CD4-positive, alpha-beta memory T cell (primary cell): ENCODE measurements at regions of chr1 and their contacts with region 1.

Region 1: GRCh38 chr1:24847995-24848881 is 81.8 kb downstream of the RUNX3 start:
- DNase-seq: peak; percentile 88 to 91 (median 89)
- H3K4me3 ChIP-seq: peak overlapping the region; percentile 18 to 73
- H3K4me3 Mint-ChIP-seq: peak overlapping the region; percentile 68 to 88 (median 78)
- H3K27ac ChIP-seq: peak overlapping the region; percentile 56
- H3K27ac Mint-ChIP-seq: peak overlapping the region; percentile 52 to 94 (median 81)
- H3K4me1 ChIP-seq: peaks cover 15% of the 10 kb centered on the region
- H3K4me1 Mint-ChIP-seq: peaks cover 7 to 22% (median 12%) of the 10 kb centered on the region in 4 donors
- H3K27me3 ChIP-seq: no peaks in the 10 kb centered on the region
- H3K27me3 Mint-ChIP-seq: no peaks in the 10 kb centered on the region

Region 2: GRCh38 chr1:24897767-24898483 is 49.7 kb after region 1 on chr1:
- CTCF ChIA-PET with region 1: interaction called, 18 read pairs
- POLR2A ChIA-PET with region 1: interaction called, 7 read pairs
- intact Hi-C with region 1: loop called (anchors 1 kb)
- DNase-seq: peak in 2 of 5 donors; percentile 36 to 49
- H3K4me3 ChIP-seq: no peak overlapping the region
- H3K4me3 Mint-ChIP-seq: peak overlapping the region in 1 of 8 donors; percentile 5
- H3K27ac ChIP-seq: no peak overlapping the region
- H3K27ac Mint-ChIP-seq: peak overlapping the region; percentile 29 to 85 (median 75)
- H3K4me1 ChIP-seq: peaks cover 18% of the 10 kb centered on the region
- H3K4me1 Mint-ChIP-seq: peaks cover 14 to 46% (median 31%) of the 10 kb centered on the region in 4 donors
- H3K27me3 ChIP-seq: no peaks in the 10 kb centered on the region
- H3K27me3 Mint-ChIP-seq: no peaks in the 10 kb centered on the region

Region 3: DNA sequence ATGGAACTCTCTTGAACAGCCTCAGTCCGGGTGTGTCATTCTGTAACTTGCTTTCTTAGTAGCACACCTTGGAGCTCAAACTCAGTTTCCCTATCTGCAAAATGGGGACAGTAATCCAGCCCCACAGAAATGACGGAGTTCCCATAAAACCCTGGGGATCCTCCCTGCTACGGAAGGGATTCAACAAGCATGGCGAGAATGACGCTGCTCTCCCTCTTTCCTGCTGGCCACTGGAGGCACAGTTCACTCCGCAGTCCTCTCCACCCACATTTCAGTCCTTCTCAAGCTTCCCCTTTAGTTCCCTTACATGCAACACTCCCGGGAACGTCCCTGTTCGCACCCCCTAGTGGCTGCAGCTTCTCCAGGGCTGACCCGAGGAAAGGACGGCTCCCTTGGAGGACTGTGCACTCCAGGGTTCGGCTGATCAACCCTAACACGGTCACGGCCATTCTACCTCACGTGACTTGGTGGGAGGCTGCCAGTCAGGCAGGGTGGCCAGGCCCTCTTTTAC is 61.2 kb after region 1 on chr1:
- CTCF ChIA-PET with region 1: interaction called, 15 read pairs
- POLR2A ChIA-PET with region 1: interaction called, 9 read pairs
- intact Hi-C with region 1: no loop called
- DNase-seq: peak in 1 of 5 donors; percentile 37
- H3K4me3 ChIP-seq: no peak overlapping the region
- H3K4me3 Mint-ChIP-seq: peak overlapping the region in 2 of 8 donors; percentile 26 to 52
- H3K27ac ChIP-seq: peak overlapping the region; percentile 77
- H3K27ac Mint-ChIP-seq: peak overlapping the region; percentile 85 to 100 (median 95)
- H3K4me1 ChIP-seq: peaks cover 68% of the 10 kb centered on the region
- H3K4me1 Mint-ChIP-seq: peaks cover 35 to 72% (median 51%) of the 10 kb centered on the region in 4 donors
- H3K27me3 ChIP-seq: no peaks in the 10 kb centered on the region
- H3K27me3 Mint-ChIP-seq: no peaks in the 10 kb centered on the region

Region 4: GRCh38 chr1:25099343-25099951 is 251.2 kb after region 1 on chr1:
- CTCF ChIA-PET with region 1: interaction called, 65 read pairs
- POLR2A ChIA-PET with region 1: interaction called, 10 read pairs
- intact Hi-C with region 1: loop called (anchors 1 kb)
- DNase-seq: peak in 2 of 5 donors; percentile 17 to 19
- H3K4me3 ChIP-seq: no peak overlapping the region
- H3K4me3 Mint-ChIP-seq: peak overlapping the region in 6 of 8 donors; percentile 38 to 88 (median 72)
- H3K27ac ChIP-seq: no peak overlapping the region
- H3K27ac Mint-ChIP-seq: peak overlapping the region; percentile 9 to 91 (median 47)
- H3K4me1 ChIP-seq: peaks cover 60% of the 10 kb centered on the region
- H3K4me1 Mint-ChIP-seq: peaks cover 42 to 70% (median 55%) of the 10 kb centered on the region in 4 donors
- H3K27me3 ChIP-seq: no peaks in the 10 kb centered on the region
- H3K27me3 Mint-ChIP-seq: no peaks in the 10 kb centered on the region

Region 5: DNA sequence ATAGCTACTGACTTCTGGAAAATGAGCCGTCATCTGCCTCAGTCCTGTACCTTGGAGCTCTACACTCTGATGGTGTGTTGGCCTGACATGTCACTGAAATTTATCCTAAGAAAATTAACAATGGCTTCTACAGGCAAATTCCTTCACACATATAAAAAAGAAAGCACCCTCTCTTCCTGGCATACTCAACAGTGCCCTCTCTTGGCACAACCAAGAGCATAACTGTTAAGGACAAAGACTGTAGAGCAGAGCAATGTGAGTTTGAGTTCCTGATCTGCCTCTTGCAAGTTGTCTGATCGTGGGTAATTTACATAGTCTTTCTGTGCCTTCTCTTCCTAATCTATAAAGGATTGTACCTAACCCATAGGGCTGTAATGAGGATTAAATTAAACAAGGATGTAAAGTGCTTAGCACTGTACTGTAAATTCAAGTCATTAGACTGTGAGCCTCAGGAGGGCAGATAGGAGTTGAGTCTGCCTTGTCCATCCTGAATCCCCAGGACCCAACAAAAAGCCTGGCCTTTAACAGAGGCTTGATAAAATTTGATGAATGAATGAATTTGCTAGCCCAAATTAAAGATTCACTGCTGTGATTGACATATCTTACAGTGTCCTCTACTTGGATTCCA is 300.5 kb after region 1 on chr1:
- CTCF ChIA-PET with region 1: interaction called, 11 read pairs
- POLR2A ChIA-PET with region 1: interaction called, 4 read pairs
- intact Hi-C with region 1: loop called (anchors 1 kb)
- DNase-seq: peak; percentile 23 to 46 (median 33)
- H3K4me3 ChIP-seq: no peak overlapping the region
- H3K4me3 Mint-ChIP-seq: no peak overlapping the region
- H3K27ac ChIP-seq: no peak overlapping the region
- H3K27ac Mint-ChIP-seq: no peak overlapping the region
- H3K4me1 ChIP-seq: no peaks in the 10 kb centered on the region
- H3K4me1 Mint-ChIP-seq: peaks cover 0 to 4% (median 1%) of the 10 kb centered on the region in 4 donors
- H3K27me3 ChIP-seq: peaks cover under 1% of the 10 kb centered on the region
- H3K27me3 Mint-ChIP-seq: peaks cover 23 to 32% of the 10 kb centered on the region in 2 donors

Region 6: DNA sequence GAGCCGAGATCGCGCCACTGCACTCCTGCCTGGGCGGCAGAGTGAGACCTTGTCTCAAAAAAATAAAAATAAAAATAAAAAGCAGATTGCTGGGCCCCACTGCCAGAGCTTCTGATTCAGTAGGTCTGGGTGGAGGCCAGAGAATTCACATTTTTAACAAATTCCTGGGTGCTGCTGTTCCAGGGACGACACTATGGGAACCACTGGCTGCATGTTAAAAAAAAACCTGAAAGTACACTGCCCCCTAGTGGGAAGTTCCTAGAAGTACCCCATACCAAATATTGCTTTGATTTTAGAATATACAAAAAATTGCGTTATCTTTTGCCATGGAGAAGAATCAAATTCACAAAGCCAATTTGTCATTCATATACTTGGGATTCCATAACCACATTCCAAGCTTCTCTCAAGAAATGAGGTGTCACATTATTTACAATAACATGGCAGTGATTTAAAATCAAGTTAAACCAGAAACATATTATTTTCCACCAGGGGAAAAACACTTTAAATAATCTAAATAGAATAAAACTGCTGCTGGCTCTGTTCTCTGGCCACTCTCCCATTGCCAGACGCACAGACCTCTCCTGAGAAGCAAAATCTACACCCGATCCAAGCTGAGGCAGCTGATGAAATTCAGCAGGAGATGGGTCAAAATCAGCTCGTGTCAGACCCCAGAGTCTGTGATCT is 356.7 kb after region 1 on chr1:
- CTCF ChIA-PET with region 1: interaction called, 39 read pairs
- POLR2A ChIA-PET with region 1: no interaction called
- intact Hi-C with region 1: loop called (anchors 1 kb)
- DNase-seq: peak in 4 of 5 donors; percentile 45 to 59 (median 50)
- H3K4me3 ChIP-seq: no peak overlapping the region
- H3K4me3 Mint-ChIP-seq: no peak overlapping the region
- H3K27ac ChIP-seq: no peak overlapping the region
- H3K27ac Mint-ChIP-seq: no peak overlapping the region
- H3K4me1 ChIP-seq: no peaks in the 10 kb centered on the region
- H3K4me1 Mint-ChIP-seq: peaks cover 0 to 2% (median 0%) of the 10 kb centered on the region in 4 donors
- H3K27me3 ChIP-seq: no peaks in the 10 kb centered on the region
- H3K27me3 Mint-ChIP-seq: peaks cover under 1 to 9% of the 10 kb centered on the region in 2 donors